Testis (tissue), 5 donors: ENCODE measurements at regions of chr4 and their contacts with region 1.

Region 1: DNA sequence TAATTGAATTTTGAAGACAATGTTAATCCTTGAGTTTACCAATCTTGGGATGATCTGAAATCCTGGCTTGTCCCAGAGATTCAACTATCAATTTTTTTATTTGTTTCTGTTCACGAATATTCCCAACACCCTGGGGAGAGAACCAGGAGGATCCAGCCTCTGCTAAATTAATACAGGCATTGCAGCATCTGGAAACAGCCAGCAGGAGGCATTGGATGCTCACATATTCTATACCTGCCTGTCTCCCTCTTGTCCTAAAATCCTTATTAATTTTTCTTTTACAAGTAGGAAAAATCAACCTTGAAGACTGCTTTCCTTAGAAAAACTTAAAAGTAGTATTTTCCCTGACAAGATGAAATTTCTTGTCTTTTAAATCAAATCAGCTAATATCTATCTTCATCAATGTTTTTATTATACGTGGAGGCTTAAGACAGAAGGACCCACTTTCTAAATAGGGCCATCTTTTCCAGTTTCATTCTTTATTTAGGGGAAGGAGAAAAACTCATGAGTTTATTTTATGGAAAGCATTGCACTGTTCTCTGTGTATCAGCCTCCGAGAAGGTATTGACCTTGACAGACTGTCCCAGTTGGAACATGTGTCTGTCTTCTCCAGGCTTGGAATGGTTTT is 102.4 kb downstream of the CLNK start:
- DNase-seq: peak; percentile 77
- H3K4me3 ChIP-seq: no peak overlapping the region
- H3K27ac ChIP-seq: no peak overlapping the region
- H3K4me1 ChIP-seq: peaks cover 3% of the 10 kb centered on the region
- H3K27me3 ChIP-seq: no peaks in the 10 kb centered on the region
- CTCF ChIP-seq: peak; percentile 79 to 89 (median 87)
- POLR2A ChIP-seq: no peak

Region 2: DNA sequence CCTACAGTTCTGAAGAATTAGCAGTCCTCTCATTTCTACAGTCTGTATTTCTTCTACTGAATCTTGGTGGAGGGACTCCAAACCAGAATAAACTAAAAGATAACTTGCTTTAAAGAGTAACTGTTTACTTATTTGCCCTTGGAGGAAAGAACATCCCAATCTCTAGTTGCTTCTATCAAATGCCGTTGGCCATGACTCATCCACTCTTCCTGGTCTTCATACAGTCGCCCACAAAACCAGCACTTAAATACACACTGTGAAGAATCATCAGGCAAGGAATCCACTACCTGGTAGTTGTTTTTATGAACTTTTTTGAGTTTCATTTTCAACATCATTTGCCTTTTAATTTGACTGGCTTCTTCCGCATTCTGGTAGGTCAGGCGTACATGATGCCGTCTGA is 139.2 kb before region 1 on chr4:
- intact Hi-C with region 1: no loop called
- DNase-seq: no peak
- H3K4me3 ChIP-seq: no peak overlapping the region
- H3K27ac ChIP-seq: no peak overlapping the region
- H3K4me1 ChIP-seq: no peaks in the 10 kb centered on the region
- H3K27me3 ChIP-seq: no peaks in the 10 kb centered on the region
- CTCF ChIP-seq: no peak
- POLR2A ChIP-seq: no peak

Region 3: DNA sequence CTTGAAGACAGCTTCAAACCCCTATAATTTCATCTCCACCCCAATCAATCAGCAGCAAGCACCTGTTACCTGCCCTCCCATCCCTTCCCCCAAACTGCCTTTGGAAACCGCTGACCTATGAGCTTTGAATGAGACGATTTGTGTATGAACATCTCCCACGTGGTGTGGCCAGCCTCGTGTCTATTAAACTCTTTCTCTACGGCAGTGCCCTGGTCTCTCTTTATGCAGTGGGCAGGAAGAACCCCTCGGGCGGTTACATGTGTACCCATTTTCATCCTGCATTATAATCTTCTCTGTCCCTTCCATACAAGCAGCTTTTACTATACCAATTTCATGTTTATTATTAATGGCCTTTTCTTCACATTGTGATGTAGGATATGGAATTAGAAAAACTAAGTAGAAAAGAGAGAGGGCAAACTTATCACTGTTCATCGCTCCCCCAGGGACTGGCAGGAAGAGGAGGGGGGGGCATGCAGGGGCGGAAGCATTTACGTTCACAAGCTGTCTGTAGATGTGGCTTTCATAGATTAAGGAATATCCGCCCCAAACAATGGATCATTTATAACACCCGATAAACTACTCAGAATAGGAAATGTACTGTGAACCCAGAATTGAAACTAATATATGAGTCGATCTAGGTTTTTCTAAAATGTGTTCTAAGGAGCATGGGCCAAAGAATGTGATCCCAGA is 29.4 kb before region 1 on chr4:
- intact Hi-C with region 1: no loop called
- DNase-seq: no peak
- H3K4me3 ChIP-seq: no peak overlapping the region
- H3K27ac ChIP-seq: no peak overlapping the region
- H3K4me1 ChIP-seq: peaks cover 3% of the 10 kb centered on the region
- H3K27me3 ChIP-seq: no peaks in the 10 kb centered on the region
- CTCF ChIP-seq: no peak
- POLR2A ChIP-seq: no peak

Region 4: GRCh38 chr4:11021333-11021732 is 439.2 kb after region 1 on chr4:
- intact Hi-C with region 1: loop called (anchors 10 kb)
- DNase-seq: no peak
- H3K4me3 ChIP-seq: no peak overlapping the region
- H3K27ac ChIP-seq: no peak overlapping the region
- H3K4me1 ChIP-seq: peaks cover 5% of the 10 kb centered on the region
- H3K27me3 ChIP-seq: no peaks in the 10 kb centered on the region
- CTCF ChIP-seq: no peak
- POLR2A ChIP-seq: no peak

Region 5: DNA sequence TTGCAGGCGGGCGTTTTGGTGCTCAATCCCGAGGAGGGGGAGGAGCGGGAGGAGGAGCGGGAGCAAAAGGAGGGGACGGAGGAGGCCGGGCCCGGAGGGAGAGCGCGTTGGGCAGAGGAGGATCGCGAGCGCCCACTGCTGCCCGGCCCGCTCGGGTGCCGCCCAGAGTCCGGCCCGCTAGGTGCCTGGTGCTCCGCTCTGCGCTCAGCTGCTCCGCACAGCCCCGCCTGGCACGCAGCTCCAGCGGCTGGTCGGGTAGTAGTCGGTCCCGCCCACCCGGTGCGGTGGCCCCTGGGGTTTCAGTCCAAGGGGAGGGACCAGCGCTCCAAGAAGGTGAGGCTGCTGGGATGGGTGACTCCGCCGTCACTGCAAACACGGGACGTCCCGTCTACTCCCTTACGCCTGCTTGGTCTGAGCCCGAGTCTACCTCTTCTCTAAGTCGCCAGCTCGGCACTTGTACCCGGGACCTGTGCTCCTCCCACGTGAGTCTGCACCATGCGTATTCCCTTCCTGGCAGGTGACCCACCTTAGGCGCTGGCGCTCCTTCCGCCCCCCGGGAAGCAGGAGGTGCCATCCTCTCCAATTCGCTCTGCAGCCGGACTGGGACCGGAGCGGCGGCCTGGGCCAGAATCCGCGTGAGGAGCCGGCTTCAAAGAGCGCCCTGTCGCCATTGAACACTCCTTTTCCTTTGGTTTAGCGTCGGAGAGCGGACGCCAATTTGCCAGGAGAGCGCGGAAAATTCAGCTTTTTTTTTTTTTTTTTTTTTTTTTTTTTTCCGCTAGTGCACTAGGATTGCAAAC is 846.9 kb after region 1 on chr4:
- intact Hi-C with region 1: loop called (anchors 5 kb)
- DNase-seq: peak; percentile 81
- H3K4me3 ChIP-seq: peak overlapping the region; percentile 66 to 80
- H3K27ac ChIP-seq: peak overlapping the region; percentile 6 to 43
- H3K4me1 ChIP-seq: no peaks in the 10 kb centered on the region
- H3K27me3 ChIP-seq: no peaks in the 10 kb centered on the region
- CTCF ChIP-seq: peak; percentile 43 to 72 (median 63)
- POLR2A ChIP-seq: no peak